ENCODE measurements at regions of chr12 and their contacts with region 1.

Region 1: GRCh38 chr12:89461649-89462612 is 62.7 kb downstream of the GALNT4 start:
- DNase-seq: no peak
- H3K4me3 ChIP-seq: no peak overlapping the region
- H3K27ac ChIP-seq: no peak overlapping the region
- H3K4me1 ChIP-seq: peaks cover 0 to 4% (median 1%) of the 10 kb centered on the region in 4 experiments; a peak in 3 of 7 replicates
- H3K27me3 ChIP-seq: no peaks in the 10 kb centered on the region
- CTCF ChIP-seq: peak in 2 of 3 experiments; percentile 34 to 37; a peak in 2 of 4 replicates
- EP300 ChIP-seq: no peak
- POLR2A ChIP-seq: no peak
- RAD21 ChIP-seq: peak; percentile 78 to 84

Region 2: GRCh38 chr12:88946372-88946997 is 515.4 kb before region 1 on chr12:
- CTCF ChIA-PET with region 1: no interaction called
- POLR2A ChIA-PET with region 1: no interaction called
- DNase-seq: no peak
- H3K4me3 ChIP-seq: no peak overlapping the region
- H3K27ac ChIP-seq: no peak overlapping the region
- H3K4me1 ChIP-seq: peaks cover 0 to 8% (median 6%) of the 10 kb centered on the region in 4 experiments; a peak in 2 of 7 replicates
- H3K27me3 ChIP-seq: peaks cover 0 to 15% (median 9%) of the 10 kb centered on the region in 4 experiments; a peak in 5 of 7 replicates
- CTCF ChIP-seq: no peak
- EP300 ChIP-seq: no peak
- POLR2A ChIP-seq: no peak
- RAD21 ChIP-seq: no peak

Region 3: DNA sequence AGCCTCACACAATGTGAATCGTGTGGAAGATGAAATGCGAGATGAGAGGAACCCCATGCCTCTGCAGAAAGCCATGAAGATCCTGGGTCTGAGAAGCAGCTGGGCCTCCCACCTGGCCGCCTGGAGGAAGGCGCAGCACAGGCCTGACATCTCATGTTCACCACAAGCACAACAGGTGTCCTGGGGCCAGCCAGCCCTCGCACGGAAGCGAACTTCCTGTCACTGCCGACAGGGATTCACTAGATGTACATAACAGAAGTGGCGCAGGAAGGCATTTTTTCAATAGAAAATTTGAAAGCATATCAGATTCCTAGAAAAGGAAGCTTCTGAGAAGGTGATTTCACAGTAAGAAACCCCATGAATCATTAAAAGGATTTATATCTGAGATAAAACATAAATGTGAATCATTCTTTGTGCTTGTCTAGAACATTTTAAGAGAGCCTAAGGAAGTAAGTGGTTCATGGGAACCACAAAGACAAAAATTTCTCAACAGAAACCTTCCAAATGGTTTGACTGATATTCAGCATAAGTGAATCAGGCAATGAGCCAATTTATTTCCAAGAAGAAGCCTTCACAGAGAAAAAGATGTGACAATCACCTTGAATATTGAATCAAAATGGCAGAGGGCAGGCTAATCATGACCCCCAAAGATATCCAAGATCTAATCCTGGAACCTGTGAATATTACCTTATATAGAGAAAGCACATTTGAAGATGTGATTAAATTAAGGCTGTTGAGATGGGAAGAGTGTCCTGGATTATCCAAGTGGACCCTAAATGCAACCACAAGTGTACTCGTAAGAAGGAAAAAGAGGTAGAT is 421.6 kb before region 1 on chr12:
- CTCF ChIA-PET with region 1: interaction called, 19 read pairs
- POLR2A ChIA-PET with region 1: no interaction called
- DNase-seq: no peak
- H3K4me3 ChIP-seq: no peak overlapping the region
- H3K27ac ChIP-seq: no peak overlapping the region
- H3K4me1 ChIP-seq: peaks cover 0 to 5% (median 0%) of the 10 kb centered on the region in 4 experiments; a peak in 1 of 7 replicates
- H3K27me3 ChIP-seq: no peaks in the 10 kb centered on the region
- CTCF ChIP-seq: no peak
- EP300 ChIP-seq: no peak
- POLR2A ChIP-seq: no peak
- RAD21 ChIP-seq: no peak; a peak in 1 of 4 replicates

Region 4: DNA sequence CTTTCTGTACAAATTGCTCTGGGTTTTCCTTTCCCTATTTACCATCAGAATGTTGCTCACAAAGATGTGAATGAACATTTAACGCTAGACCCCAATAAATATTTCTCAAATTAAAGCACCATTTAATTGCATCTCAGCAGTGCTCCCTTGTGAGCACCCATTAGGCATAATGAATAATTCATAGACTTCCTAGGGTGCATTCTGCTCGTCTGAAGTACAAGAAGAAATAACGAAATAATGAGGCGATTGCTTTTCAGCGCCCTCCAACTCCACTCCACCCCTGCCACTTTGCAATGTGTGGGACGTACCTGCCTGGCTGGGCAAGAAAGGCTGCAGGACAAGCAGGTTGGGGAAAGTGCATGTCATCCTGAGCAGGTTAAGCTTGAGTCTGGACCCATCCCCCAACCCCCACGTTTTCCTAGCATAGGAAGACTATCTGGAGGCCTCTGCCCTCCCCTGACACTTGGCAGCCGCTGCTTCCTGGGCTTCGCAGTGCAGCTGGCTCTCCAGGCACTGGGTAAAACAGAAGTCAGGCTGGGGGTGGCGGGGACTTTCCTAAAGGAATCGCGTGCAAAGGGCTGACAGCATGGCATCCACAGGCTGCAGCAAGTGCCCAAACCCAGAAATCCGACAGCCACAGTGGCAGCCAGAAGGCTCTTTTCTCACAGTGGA is 363.4 kb before region 1 on chr12:
- CTCF ChIA-PET with region 1: interaction called, 10 read pairs
- POLR2A ChIA-PET with region 1: no interaction called
- DNase-seq: peak; percentile 53 to 70
- H3K4me3 ChIP-seq: peak overlapping the region in 3 of 4 experiments; percentile 11 to 42 (median 19); a peak in 5 of 8 replicates
- H3K27ac ChIP-seq: 0 out of 2 replicates have a peak overlapping the region, but pooled peaks have one; percentile 5
- H3K4me1 ChIP-seq: peaks cover 7 to 27% (median 19%) of the 10 kb centered on the region in 4 experiments
- H3K27me3 ChIP-seq: no peaks in the 10 kb centered on the region
- CTCF ChIP-seq: no peak
- EP300 ChIP-seq: peak in 1 of 2 experiments; percentile 78; a peak in 2 of 3 replicates
- POLR2A ChIP-seq: no peak
- RAD21 ChIP-seq: peak in 1 of 2 experiments; percentile 22; a peak in 1 of 4 replicates

Region 5: GRCh38 chr12:89352492-89353187 is 109.3 kb before region 1 on chr12 and contains the start of gene DUSP6:
- CTCF ChIA-PET with region 1: interaction called, 28 read pairs
- POLR2A ChIA-PET with region 1: interaction called, 8 read pairs
- DNase-seq: peak; percentile 93 to 96
- H3K4me3 ChIP-seq: peak within 1 kb of the TSS; percentile 49 to 85 (median 83)
- H3K27ac ChIP-seq: peak within 1 kb of the TSS; percentile 82
- H3K4me1 ChIP-seq: peaks cover 19 to 27% (median 21%) of the 10 kb centered on the region in 4 experiments
- H3K27me3 ChIP-seq: peaks cover 8 to 54% (median 31%) of the 10 kb centered on the region in 4 experiments
- CTCF ChIP-seq: no peak
- EP300 ChIP-seq: peak; percentile 18 to 81; a peak in 2 of 3 replicates
- POLR2A ChIP-seq: peak; percentile 90 to 92
- RAD21 ChIP-seq: peak in 1 of 2 experiments; percentile 1; a peak in 2 of 4 replicates
- total RNA-seq, gene DUSP6: 152 and 179 TPM in 2 replicates

Region 6: DNA sequence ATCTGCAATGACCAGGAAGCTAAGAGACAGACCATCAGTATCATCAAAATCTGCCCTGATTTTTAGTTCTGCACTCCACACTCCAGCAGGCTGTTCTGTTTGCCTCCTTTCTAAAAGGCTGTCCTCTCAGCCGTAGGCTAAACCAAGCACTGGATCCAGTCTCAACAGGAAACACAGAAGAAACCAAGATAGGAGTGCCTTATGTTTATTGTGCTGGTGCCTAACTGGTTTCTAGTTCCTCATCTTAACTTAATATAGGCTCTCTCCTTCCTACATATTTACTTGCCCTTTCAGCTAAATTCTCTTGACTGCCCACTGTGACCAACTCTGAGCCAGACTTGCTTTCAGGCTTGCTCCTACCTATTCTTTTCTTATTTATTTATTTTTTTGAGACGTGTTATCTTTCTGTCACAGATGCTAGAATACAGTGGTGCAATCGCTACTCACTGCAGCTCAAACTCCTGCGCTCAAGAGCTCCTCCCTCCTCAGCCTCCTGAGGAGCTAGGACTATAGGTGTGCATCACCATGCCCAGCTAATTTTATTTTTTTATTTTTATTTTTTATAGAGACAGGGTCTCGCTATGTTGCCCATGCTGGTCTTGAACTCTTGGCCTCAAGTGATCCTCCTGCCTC is 31.9 kb after region 1 on chr12:
- CTCF ChIA-PET with region 1: interaction called, 10 read pairs
- POLR2A ChIA-PET with region 1: no interaction called
- DNase-seq: no peak
- H3K4me3 ChIP-seq: no peak overlapping the region
- H3K27ac ChIP-seq: no peak overlapping the region
- H3K4me1 ChIP-seq: 0 out of 7 replicates have a peak, but pooled peaks cover 0 to 3% (median 0%) of the 10 kb centered on the region in 4 experiments
- H3K27me3 ChIP-seq: no peaks in the 10 kb centered on the region
- CTCF ChIP-seq: no peak
- EP300 ChIP-seq: no peak
- POLR2A ChIP-seq: no peak
- RAD21 ChIP-seq: no peak